MCF 10A (cell line): ENCODE measurements at regions of chr10 and their contacts with region 1.

Region 1: GRCh38 chr10:82150120-82150900 is 275.3 kb downstream of the NRG3 start:
- DNase-seq: peak; percentile 65
- H3K4me3 Mint-ChIP-seq: no peak overlapping the region
- H3K27ac Mint-ChIP-seq: no peak overlapping the region
- H3K4me1 Mint-ChIP-seq: peaks cover 20% of the 10 kb centered on the region
- H3K27me3 Mint-ChIP-seq: no peaks in the 10 kb centered on the region
- CTCF ChIP-seq: peak; percentile 22

Region 2: DNA sequence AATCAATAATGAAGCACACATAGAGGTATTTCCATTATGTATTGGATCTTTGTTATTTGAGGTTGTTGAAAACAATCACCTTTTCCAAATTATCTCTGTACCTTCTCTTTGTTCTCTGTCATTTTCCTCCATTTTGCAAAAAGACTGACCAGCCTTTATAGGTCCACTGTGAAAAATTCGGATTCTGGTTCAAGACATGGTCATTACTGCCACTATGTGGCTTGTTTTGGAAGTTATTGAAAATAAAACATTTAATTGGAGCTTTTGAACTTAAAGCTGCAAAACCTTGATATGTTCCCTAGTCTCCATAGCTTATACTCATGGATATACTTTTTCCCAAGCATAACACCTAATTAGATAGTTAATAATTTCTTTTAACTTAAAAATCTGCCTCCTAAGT is 819.1 kb after region 1 on chr10:
- CTCF ChIA-PET with region 1: no interaction called
- POLR2A ChIA-PET with region 1: no interaction called
- intact Hi-C with region 1: loop called (anchors 5 kb)
- DNase-seq: peak; percentile 24
- H3K4me3 Mint-ChIP-seq: no peak overlapping the region
- H3K27ac Mint-ChIP-seq: no peak overlapping the region
- H3K4me1 Mint-ChIP-seq: no peaks in the 10 kb centered on the region
- H3K27me3 Mint-ChIP-seq: no peaks in the 10 kb centered on the region
- CTCF ChIP-seq: peak; percentile 50